ENCODE measurements at regions of chr1 and their contacts with region 1.

Region 1: GRCh38 chr1:151047925-151048645 is 534 bp downstream of the C1orf56 start:
- DNase-seq: peak; percentile 79
- H3K4me3 ChIP-seq: peak overlapping the region; percentile 73 to 77
- H3K27ac ChIP-seq: peak overlapping the region; percentile 70 to 95
- H3K4me1 ChIP-seq: peaks cover 0 to 12% of the 10 kb centered on the region in 2 experiments; a peak in 2 of 4 replicates
- H3K27me3 ChIP-seq: no peaks in the 10 kb centered on the region
- CTCF ChIP-seq: peak; percentile 61
- EP300 ChIP-seq: no peak
- RAD21 ChIP-seq: no peak; the same call in 1 of the 2 replicates

Region 2: DNA sequence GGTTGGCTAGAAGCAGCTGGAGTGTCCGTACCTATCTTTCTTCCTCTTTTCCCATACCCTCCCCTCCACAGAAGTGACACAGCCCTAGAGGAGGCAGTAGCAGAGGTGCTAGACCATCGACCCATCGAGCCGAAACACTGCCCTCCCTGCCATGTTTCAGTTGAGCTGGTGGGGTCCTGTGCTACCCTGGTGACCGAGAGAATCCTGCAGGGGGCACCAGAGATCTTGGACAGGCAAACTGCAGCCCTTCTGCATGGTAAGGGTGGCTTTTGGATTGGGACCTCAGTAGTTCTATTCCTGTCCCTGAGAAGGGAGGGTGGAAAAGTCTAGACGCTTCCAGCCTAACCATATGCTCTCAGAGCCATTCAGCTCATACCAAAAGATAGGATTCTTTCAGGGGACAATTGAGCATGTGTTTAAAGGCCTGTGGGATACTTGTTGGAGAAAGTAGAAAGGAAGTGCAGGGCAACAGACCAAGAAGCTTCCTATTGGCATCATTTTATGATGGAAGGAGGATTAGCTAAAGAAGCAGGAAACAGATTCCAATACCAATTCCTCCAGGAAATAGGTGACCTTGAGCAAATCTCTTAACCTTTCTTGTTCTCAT is 23.4 kb before region 1 on chr1:
- CTCF ChIA-PET with region 1: interaction called, 29 read pairs
- POLR2A ChIA-PET with region 1: no interaction called
- DNase-seq: peak; percentile 80
- H3K4me3 ChIP-seq: no peak overlapping the region; a peak in 1 of 4 replicates
- H3K27ac ChIP-seq: no peak overlapping the region
- H3K4me1 ChIP-seq: no peaks in the 10 kb centered on the region
- H3K27me3 ChIP-seq: no peaks in the 10 kb centered on the region
- CTCF ChIP-seq: peak; percentile 76
- EP300 ChIP-seq: no peak
- RAD21 ChIP-seq: peak; percentile 81

Region 3: DNA sequence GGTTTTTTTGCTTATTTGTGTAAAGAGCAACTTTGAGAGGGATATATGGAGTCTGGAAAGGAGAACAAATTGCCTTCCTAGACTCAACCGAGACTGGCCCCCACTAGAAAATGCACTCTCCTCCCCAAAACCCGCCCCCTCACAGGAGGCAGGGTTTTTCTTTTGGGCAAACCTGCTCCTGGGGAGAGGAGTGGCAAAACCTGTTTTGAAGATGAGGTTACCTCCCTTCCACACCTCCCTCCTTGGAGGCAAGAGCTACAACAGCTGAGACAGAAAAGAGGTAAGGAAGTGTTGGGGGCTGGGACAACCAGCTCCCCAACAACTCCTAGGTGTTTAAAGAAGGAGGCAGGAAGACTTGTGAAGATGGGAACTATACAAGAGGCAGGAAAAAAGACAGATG is 11.7 kb before region 1 on chr1 and contains the start of gene BNIPL:
- CTCF ChIA-PET with region 1: interaction called, 10 read pairs
- POLR2A ChIA-PET with region 1: no interaction called
- DNase-seq: no peak
- H3K4me3 ChIP-seq: no peak within 1 kb of the TSS
- H3K27ac ChIP-seq: no peak within 1 kb of the TSS
- H3K4me1 ChIP-seq: no peaks in the 10 kb centered on the region
- H3K27me3 ChIP-seq: no peaks in the 10 kb centered on the region
- CTCF ChIP-seq: no peak
- EP300 ChIP-seq: no peak
- RAD21 ChIP-seq: no peak
- polyA plus RNA-seq, gene BNIPL: 0.12 and 0.16 TPM in 2 replicates

Region 4: GRCh38 chr1:151059078-151059907 is 11.2 kb after region 1 on chr1 and contains the start of gene CDC42SE1:
- CTCF ChIA-PET with region 1: interaction called, 67 read pairs
- POLR2A ChIA-PET with region 1: interaction called, 24 read pairs
- DNase-seq: peak; percentile 93
- H3K4me3 ChIP-seq: peak within 1 kb of the TSS; percentile 79 to 81
- H3K27ac ChIP-seq: peak within 1 kb of the TSS; percentile 99
- H3K4me1 ChIP-seq: peaks cover 11 to 28% of the 10 kb centered on the region in 2 experiments; a peak in 3 of 4 replicates
- H3K27me3 ChIP-seq: no peaks in the 10 kb centered on the region
- CTCF ChIP-seq: peak; percentile 68
- EP300 ChIP-seq: no peak; a peak in 1 of 4 replicates
- RAD21 ChIP-seq: no peak; the same call in 1 of the 2 replicates
- polyA plus RNA-seq, gene CDC42SE1: 47.8 and 65.6 TPM in 2 replicates

Region 5: DNA sequence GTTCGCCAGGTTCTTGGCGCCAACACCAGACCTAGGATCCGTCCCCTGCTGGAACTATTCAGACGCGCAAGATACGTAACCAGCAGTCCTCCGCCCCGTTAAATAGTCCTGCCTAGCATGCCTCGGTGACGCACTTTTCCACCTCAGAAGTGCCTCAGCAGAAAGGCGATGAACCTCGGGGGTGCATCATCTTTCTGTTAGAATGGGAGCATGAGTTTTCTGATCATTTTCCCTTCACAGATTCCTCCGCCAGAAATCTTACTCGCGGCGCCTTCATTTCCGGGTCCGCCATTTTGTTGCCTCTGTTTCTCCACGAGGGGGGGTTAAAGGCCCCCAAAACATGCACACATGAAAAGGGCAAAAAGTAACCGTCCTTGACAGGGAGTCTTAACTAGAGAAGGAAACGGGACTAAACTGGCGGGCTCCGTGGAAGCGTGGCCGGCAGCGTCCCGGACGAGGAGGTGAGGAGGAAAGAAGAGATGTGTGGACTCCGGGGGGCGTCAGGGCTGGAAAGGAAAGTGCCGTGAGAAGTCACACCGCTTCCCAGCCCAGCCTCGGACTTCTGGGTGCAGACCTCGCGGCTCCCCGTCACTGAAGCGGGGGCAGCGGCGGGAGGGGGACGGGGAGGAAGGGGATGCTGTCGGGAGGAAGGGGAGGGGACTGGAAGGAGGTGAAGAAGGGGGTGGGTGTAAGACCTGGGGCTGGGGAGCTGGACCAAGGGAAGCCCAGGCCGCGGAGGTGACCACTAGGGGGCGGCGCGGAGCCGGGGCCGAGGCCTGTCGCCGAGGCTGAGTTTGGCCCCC is 22.6 kb after region 1 on chr1 and contains the start of gene GABPB2:
- CTCF ChIA-PET with region 1: interaction called, 10 read pairs
- POLR2A ChIA-PET with region 1: no interaction called
- DNase-seq: peak; percentile 89
- H3K4me3 ChIP-seq: peak within 1 kb of the TSS; percentile 50 to 57
- H3K27ac ChIP-seq: peak within 1 kb of the TSS; percentile 91 to 95
- H3K4me1 ChIP-seq: no peaks in the 10 kb centered on the region; a peak in 1 of 4 replicates
- H3K27me3 ChIP-seq: no peaks in the 10 kb centered on the region
- CTCF ChIP-seq: peak; percentile 73
- EP300 ChIP-seq: no peak
- RAD21 ChIP-seq: peak; percentile 35
- polyA plus RNA-seq, gene GABPB2: 2.4 and 3.9 TPM in 2 replicates

Measured in SK-N-SH (cell line).